B cell (primary cell): ENCODE measurements at regions of chr7 and their contacts with region 1.

Region 1: GRCh38 chr7:121329191-121330052 is 622 bp downstream of the WNT16 start:
- DNase-seq: peak; percentile 65
- ATAC-seq: peak; percentile 49
- H3K4me3 ChIP-seq: peak overlapping the region; percentile 54 to 97 (median 86)
- H3K4me3 Mint-ChIP-seq: peak overlapping the region; percentile 91
- H3K27ac ChIP-seq: peak overlapping the region; percentile 25 to 32
- H3K27ac Mint-ChIP-seq: peak overlapping the region; percentile 92
- H3K4me1 ChIP-seq: peaks cover 20 to 21% of the 10 kb centered on the region in 2 donors
- H3K4me1 Mint-ChIP-seq: peaks cover 46% of the 10 kb centered on the region
- H3K27me3 ChIP-seq: peaks cover 0 to 3% (median 0%) of the 10 kb centered on the region in 4 experiments
- H3K27me3 Mint-ChIP-seq: peaks cover 13% of the 10 kb centered on the region
- CTCF ChIP-seq: peak; percentile 26

Region 2: GRCh38 chr7:121126801-121127534 is 202.5 kb before region 1 on chr7:
- CTCF ChIA-PET with region 1: interaction called, 11 read pairs
- POLR2A ChIA-PET with region 1: no interaction called
- intact Hi-C with region 1: no loop called
- DNase-seq: peak; percentile 51
- ATAC-seq: no peak
- H3K4me3 ChIP-seq: no peak overlapping the region
- H3K4me3 Mint-ChIP-seq: no peak overlapping the region
- H3K27ac ChIP-seq: no peak overlapping the region
- H3K27ac Mint-ChIP-seq: no peak overlapping the region
- H3K4me1 ChIP-seq: peaks cover 0 to 15% of the 10 kb centered on the region in 2 donors
- H3K4me1 Mint-ChIP-seq: peaks cover 9% of the 10 kb centered on the region
- H3K27me3 ChIP-seq: no peaks in the 10 kb centered on the region
- H3K27me3 Mint-ChIP-seq: no peaks in the 10 kb centered on the region
- CTCF ChIP-seq: peak; percentile 74

Region 3: DNA sequence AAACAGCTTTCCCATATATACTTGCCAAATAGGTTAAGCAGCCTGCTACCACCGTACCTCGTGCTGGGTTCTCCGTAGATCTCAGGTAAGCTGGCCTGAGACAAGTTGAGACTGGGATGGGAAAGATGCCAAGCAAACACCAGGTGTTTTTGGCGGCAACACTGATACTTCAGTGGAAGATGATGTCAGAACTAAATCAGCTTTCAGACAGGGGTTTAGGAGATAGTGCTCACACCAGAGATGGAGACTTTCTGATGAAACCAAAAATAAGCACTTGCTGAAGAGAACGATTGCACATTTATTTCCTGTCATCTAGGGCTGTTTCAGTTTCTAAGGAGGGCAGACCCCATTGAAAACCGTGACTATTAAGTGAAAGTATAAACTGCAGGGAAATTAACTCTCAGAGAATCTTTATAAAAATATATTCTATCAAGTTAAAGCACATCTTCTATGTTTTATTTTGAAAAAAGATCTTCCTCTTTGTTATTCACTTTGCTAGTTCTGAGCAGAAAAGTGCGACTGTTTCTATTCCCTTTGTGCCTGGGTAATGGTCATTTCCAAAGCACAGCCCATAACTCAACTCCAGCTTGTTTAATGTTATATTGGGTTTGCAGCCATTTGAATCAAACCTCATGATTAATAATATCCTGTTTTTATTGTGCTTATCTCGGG is 191.0 kb before region 1 on chr7:
- CTCF ChIA-PET with region 1: interaction called, 4 read pairs
- POLR2A ChIA-PET with region 1: interaction called, 7 read pairs
- intact Hi-C with region 1: loop called (anchors 2 kb)
- DNase-seq: peak; percentile 74
- ATAC-seq: peak; percentile 97
- H3K4me3 ChIP-seq: peak overlapping the region; percentile 46 to 84 (median 59)
- H3K4me3 Mint-ChIP-seq: peak overlapping the region; percentile 97
- H3K27ac ChIP-seq: peak overlapping the region; percentile 76 to 91
- H3K27ac Mint-ChIP-seq: peak overlapping the region; percentile 98
- H3K4me1 ChIP-seq: peaks cover 21 to 25% of the 10 kb centered on the region in 2 donors
- H3K4me1 Mint-ChIP-seq: peaks cover 34% of the 10 kb centered on the region
- H3K27me3 ChIP-seq: no peaks in the 10 kb centered on the region
- H3K27me3 Mint-ChIP-seq: no peaks in the 10 kb centered on the region
- CTCF ChIP-seq: no peak

Region 4: GRCh38 chr7:121163699-121164098 is 165.7 kb before region 1 on chr7:
- CTCF ChIA-PET with region 1: interaction called, 24 read pairs
- POLR2A ChIA-PET with region 1: no interaction called
- intact Hi-C with region 1: no loop called
- DNase-seq: no peak
- ATAC-seq: peak; percentile 28
- H3K4me3 ChIP-seq: no peak overlapping the region
- H3K4me3 Mint-ChIP-seq: no peak overlapping the region
- H3K27ac ChIP-seq: no peak overlapping the region
- H3K27ac Mint-ChIP-seq: peak overlapping the region; percentile 81
- H3K4me1 ChIP-seq: peaks cover 27 to 35% of the 10 kb centered on the region in 2 donors
- H3K4me1 Mint-ChIP-seq: peaks cover 42% of the 10 kb centered on the region
- H3K27me3 ChIP-seq: no peaks in the 10 kb centered on the region
- H3K27me3 Mint-ChIP-seq: no peaks in the 10 kb centered on the region
- CTCF ChIP-seq: no peak

Region 5: GRCh38 chr7:121288894-121289293 is 40.5 kb before region 1 on chr7:
- CTCF ChIA-PET with region 1: no interaction called
- POLR2A ChIA-PET with region 1: no interaction called
- intact Hi-C with region 1: no loop called
- DNase-seq: no peak
- ATAC-seq: no peak
- H3K4me3 ChIP-seq: no peak overlapping the region
- H3K4me3 Mint-ChIP-seq: no peak overlapping the region
- H3K27ac ChIP-seq: no peak overlapping the region
- H3K27ac Mint-ChIP-seq: no peak overlapping the region
- H3K4me1 ChIP-seq: peaks cover 6 to 9% of the 10 kb centered on the region in 2 donors
- H3K4me1 Mint-ChIP-seq: peaks cover 34% of the 10 kb centered on the region
- H3K27me3 ChIP-seq: no peaks in the 10 kb centered on the region
- H3K27me3 Mint-ChIP-seq: no peaks in the 10 kb centered on the region
- CTCF ChIP-seq: no peak

Region 6: DNA sequence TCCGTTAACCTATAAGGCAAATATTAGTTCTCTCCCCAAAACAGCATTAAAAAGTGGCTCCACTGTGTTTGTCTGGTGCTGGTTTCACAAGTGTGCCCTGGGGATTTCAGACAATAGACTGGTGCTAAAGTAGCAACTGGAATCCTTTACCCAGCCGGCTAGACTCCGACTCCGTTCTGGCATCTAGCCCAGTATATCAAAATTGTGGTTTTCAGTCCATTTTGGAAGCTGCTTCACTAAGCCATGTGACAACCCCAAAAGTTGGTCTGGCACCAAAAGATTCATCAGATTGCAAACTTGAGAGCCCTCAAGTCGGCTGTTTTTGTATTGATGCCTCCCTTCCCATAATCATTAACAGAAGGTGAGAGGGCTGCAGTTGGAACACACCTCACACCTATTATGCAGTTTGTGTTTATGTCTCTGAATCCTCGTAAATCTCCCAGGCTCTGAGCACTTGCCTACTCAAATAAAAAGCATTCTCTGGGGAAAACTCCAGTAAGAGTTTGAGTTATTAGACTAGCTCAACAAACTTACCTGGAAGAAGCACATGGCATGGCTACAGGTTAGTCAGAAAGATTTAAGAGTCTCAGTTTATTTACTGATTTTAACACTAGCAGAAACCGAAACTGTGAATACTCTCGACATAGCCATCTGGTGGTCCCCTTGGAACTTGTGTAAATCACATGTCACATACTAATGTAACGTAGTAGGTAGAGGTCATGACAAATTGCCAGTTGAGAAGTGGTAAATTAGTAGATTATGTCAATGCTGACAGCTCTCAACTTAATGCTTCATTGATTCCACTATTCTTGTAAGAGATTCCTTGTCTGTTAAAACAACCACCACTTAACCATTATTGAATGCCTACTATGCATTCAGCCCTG is 15.4 kb before region 1 on chr7:
- CTCF ChIA-PET with region 1: interaction called, 9 read pairs
- POLR2A ChIA-PET with region 1: no interaction called
- intact Hi-C with region 1: loop called (anchors 2 kb)
- DNase-seq: peak; percentile 54
- ATAC-seq: peak; percentile 88
- H3K4me3 ChIP-seq: peak overlapping the region in 3 of 5 experiments; percentile 17 to 28 (median 25)
- H3K4me3 Mint-ChIP-seq: peak overlapping the region; percentile 61
- H3K27ac ChIP-seq: peak overlapping the region; percentile 60 to 74
- H3K27ac Mint-ChIP-seq: peak overlapping the region; percentile 88
- H3K4me1 ChIP-seq: peaks cover 13 to 30% of the 10 kb centered on the region in 2 donors
- H3K4me1 Mint-ChIP-seq: peaks cover 44% of the 10 kb centered on the region
- H3K27me3 ChIP-seq: no peaks in the 10 kb centered on the region
- H3K27me3 Mint-ChIP-seq: no peaks in the 10 kb centered on the region
- CTCF ChIP-seq: no peak